Heart right ventricle (tissue), 16 donors: ENCODE measurements at regions of chr4 and their contacts with region 1.

Region 1: GRCh38 chr4:166165829-166166420 is 292.9 kb downstream of the TLL1 start:
- DNase-seq: peak in 1 of 2 donors; percentile 9
- ATAC-seq: peak in 7 of 8 donors; percentile 57 to 76 (median 65)
- H3K4me3 ChIP-seq: no peak overlapping the region
- H3K27ac ChIP-seq: no peak overlapping the region
- H3K4me1 ChIP-seq: no peaks in the 10 kb centered on the region
- H3K27me3 ChIP-seq: peaks cover 0 to 9% (median 0%) of the 10 kb centered on the region in 7 donors
- CTCF ChIP-seq: peak; percentile 47 to 79 (median 71)

Region 2: GRCh38 chr4:164937576-164938270 is 1228.2 kb before region 1 on chr4:
- intact Hi-C with region 1: no loop called
- DNase-seq: no peak
- ATAC-seq: peak in 1 of 8 donors; percentile 12
- H3K4me3 ChIP-seq: no peak overlapping the region
- H3K27ac ChIP-seq: no peak overlapping the region
- H3K4me1 ChIP-seq: no peaks in the 10 kb centered on the region
- H3K27me3 ChIP-seq: peaks cover 0 to 15% (median 6%) of the 10 kb centered on the region in 7 donors
- CTCF ChIP-seq: no peak

Region 3: GRCh38 chr4:166252487-166253402 is 86.8 kb after region 1 on chr4:
- intact Hi-C with region 1: loop called in 4 of 10 experiments (anchors 5 to 10 kb)
- DNase-seq: no peak
- ATAC-seq: no peak
- H3K4me3 ChIP-seq: no peak overlapping the region
- H3K27ac ChIP-seq: no peak overlapping the region
- H3K4me1 ChIP-seq: no peaks in the 10 kb centered on the region
- H3K27me3 ChIP-seq: no peaks in the 10 kb centered on the region
- CTCF ChIP-seq: peak in 7 of 9 donors; percentile 32 to 58 (median 48)

Region 4: GRCh38 chr4:166324321-166324720 is 158.4 kb after region 1 on chr4:
- intact Hi-C with region 1: no loop called
- DNase-seq: no peak
- ATAC-seq: no peak
- H3K4me3 ChIP-seq: no peak overlapping the region
- H3K27ac ChIP-seq: no peak overlapping the region
- H3K4me1 ChIP-seq: no peaks in the 10 kb centered on the region
- H3K27me3 ChIP-seq: no peaks in the 10 kb centered on the region
- CTCF ChIP-seq: peak in 1 of 9 donors; percentile 11

Region 5: GRCh38 chr4:166594326-166594946 is 428.5 kb after region 1 on chr4:
- intact Hi-C with region 1: loop called in 1 of 10 experiments (anchors 10 kb)
- DNase-seq: peak; percentile 10 to 32
- ATAC-seq: peak in 6 of 8 donors; percentile 78 to 93 (median 86)
- H3K4me3 ChIP-seq: no peak overlapping the region
- H3K27ac ChIP-seq: no peak overlapping the region
- H3K4me1 ChIP-seq: no peaks in the 10 kb centered on the region
- H3K27me3 ChIP-seq: no peaks in the 10 kb centered on the region
- CTCF ChIP-seq: peak in 7 of 9 donors; percentile 20 to 62 (median 34)

Region 6: DNA sequence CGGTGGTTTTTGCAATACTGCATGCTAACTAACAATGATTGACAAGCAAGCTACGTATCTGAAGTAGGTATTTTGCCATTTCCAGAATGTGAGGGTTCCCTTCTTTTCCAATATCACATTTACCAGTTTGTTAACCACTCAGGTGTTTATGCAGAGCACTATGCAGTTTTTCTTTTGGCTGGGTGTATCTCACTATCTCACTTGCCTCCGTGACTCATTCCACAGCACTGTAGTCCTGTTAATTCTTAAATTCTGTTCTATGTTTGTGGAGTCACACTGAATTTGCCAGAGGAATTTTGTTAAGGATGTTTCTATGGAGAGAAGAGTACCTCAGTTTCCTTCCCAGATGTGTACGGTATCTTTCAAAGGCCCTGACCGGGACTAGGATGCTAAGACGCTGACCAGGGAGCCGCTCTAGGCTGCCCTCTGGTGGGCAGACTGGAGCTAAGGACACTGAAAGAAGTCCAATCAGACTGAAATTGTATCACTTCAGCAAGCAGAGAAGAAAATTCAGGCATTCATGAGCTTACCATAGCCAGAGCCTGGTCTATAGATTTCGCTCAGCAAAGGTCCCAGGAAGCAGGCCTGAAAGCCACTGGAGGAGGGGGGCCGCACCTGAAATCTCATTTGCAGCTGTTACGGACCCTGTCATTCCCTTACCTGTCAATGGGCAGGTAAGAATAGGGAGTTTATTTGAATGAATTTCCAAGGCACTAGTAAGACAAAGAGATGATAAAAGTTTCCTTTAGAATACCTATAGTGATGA is 1456.7 kb after region 1 on chr4:
- intact Hi-C with region 1: loop called in 1 of 10 experiments (anchors 5 kb)
- DNase-seq: peak in 1 of 2 donors; percentile 27
- ATAC-seq: peak in 1 of 8 donors; percentile 48
- H3K4me3 ChIP-seq: no peak overlapping the region
- H3K27ac ChIP-seq: no peak overlapping the region
- H3K4me1 ChIP-seq: no peaks in the 10 kb centered on the region
- H3K27me3 ChIP-seq: no peaks in the 10 kb centered on the region
- CTCF ChIP-seq: peak in 8 of 9 donors; percentile 10 to 72 (median 63)

Region 7: DNA sequence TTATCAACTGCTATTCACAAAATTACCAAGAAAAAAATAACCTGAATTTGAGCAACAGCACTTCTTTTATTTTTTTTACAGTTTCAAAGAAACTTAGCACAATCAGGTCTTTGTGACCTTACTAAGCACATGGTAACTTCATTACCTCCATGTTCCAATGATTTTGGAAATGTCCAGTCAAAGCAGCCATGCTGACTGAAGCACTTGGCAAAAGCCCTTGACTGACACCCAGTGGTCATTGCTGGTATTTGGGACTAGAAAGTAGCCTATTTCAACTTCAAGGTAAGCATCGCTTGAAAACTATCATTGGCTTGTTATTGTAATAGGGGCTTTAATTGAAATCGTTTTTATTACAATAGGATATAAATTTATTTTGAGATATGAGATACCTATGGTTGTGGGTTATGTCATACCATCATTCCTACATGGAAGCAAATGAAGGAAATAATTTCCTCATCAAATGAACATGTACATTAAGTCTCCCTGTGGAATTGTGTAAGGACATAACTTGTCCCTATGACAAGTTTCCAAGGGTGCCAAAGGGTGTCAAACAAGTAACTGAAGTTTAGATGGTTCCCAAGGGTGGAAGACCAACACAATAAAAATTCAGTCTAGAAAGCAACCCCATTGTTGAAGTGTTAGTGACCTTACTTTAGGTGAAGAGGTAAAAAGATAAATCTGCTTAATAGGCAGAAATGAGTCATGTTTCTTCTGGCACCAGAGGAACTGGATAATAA is 1911.2 kb after region 1 on chr4:
- intact Hi-C with region 1: loop called in 1 of 10 experiments (anchors 5 kb)
- DNase-seq: peak in 1 of 2 donors; percentile 36
- ATAC-seq: peak in 1 of 8 donors; percentile 58
- H3K4me3 ChIP-seq: no peak overlapping the region
- H3K27ac ChIP-seq: no peak overlapping the region
- H3K4me1 ChIP-seq: no peaks in the 10 kb centered on the region
- H3K27me3 ChIP-seq: no peaks in the 10 kb centered on the region
- CTCF ChIP-seq: peak; percentile 38 to 83 (median 74)

Region 8: GRCh38 chr4:168153596-168154440 is 1987.9 kb after region 1 on chr4:
- intact Hi-C with region 1: loop called in 3 of 10 experiments (anchors 5 to 10 kb)
- DNase-seq: peak; percentile 63 to 67
- ATAC-seq: peak in 6 of 8 donors; percentile 57 to 75 (median 70)
- H3K4me3 ChIP-seq: peak overlapping the region in 8 of 10 donors; percentile 1 to 40 (median 28)
- H3K27ac ChIP-seq: no peak overlapping the region
- H3K4me1 ChIP-seq: peaks cover 0 to 7% (median 0%) of the 10 kb centered on the region in 9 donors
- H3K27me3 ChIP-seq: peaks cover 0 to 3% (median 0%) of the 10 kb centered on the region in 7 donors
- CTCF ChIP-seq: peak in 8 of 9 donors; percentile 7 to 74 (median 65)